Activated naive CD4-positive, alpha-beta T cell treated with anti-CD3 and anti-CD28 coated beads for 36 hours (primary cell): ENCODE measurements at regions of chr1 and their contacts with region 1.

Region 1: GRCh38 chr1:53945433-53946251 is at the start of gene IFT25:
- DNase-seq: peak; percentile 99
- H3K4me3 Mint-ChIP-seq: peak within 1 kb of the TSS; percentile 90
- H3K27ac Mint-ChIP-seq: peak within 1 kb of the TSS; percentile 87
- H3K4me1 Mint-ChIP-seq: peaks cover 45% of the 10 kb centered on the region
- H3K27me3 Mint-ChIP-seq: no peaks in the 10 kb centered on the region
- total RNA-seq, gene IFT25: 46.2 to 48.7 TPM

Region 2: DNA sequence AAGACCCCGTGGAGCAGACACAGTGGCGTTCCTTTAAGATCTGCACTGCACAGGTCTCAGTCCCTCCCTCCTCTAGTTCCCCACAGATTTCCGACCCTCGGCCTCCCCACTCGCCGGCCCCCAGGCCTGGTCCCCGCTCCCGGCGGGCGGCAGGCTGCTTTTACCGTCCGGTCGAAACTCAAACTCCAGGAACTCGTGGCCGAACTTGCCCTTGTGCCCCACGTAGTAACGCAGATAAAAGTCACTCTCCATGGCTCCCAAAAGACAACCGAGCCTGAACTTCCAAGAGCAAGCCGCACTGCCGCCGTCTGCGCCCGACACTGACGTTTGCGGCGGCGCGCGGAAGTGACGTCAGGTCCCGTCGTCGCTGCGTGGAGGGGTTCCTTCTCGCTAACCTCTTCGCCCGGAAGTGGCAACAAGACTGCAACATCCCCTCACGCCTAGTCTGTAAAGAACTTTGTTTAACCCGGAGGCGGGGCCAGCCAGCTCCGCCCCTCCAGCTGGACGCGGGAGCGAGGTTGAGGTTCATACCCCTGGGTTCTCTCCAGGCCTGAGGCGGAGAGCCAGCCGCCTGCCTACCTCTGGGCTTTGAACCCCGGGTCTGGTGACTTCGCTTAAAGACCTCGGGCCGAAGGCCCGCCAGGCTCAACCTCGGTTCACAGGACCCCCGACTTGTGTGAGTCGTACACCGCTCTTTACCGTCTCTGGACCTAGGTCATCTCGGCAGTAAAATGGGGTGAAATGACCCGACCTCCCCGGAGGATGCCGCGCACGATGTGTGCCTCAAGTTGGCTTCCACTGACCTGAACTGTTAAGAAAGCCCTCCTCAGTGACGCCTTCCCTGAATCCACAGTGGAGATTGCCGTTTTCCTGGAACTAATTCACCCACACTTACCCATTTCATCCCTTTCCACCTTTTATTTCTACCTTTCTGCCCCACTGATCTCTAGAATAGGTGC is 707.2 kb before region 1 on chr1 and contains the start of gene MAGOH:
- CTCF ChIA-PET with region 1: no interaction called
- intact Hi-C with region 1: loop called (anchors 5 kb)
- DNase-seq: peak; percentile 96
- H3K4me3 Mint-ChIP-seq: peak within 1 kb of the TSS; percentile 94
- H3K27ac Mint-ChIP-seq: peak within 1 kb of the TSS; percentile 82
- H3K4me1 Mint-ChIP-seq: peaks cover 28% of the 10 kb centered on the region
- H3K27me3 Mint-ChIP-seq: no peaks in the 10 kb centered on the region
- total RNA-seq, gene MAGOH: 83.7 to 87.2 TPM

Region 3: DNA sequence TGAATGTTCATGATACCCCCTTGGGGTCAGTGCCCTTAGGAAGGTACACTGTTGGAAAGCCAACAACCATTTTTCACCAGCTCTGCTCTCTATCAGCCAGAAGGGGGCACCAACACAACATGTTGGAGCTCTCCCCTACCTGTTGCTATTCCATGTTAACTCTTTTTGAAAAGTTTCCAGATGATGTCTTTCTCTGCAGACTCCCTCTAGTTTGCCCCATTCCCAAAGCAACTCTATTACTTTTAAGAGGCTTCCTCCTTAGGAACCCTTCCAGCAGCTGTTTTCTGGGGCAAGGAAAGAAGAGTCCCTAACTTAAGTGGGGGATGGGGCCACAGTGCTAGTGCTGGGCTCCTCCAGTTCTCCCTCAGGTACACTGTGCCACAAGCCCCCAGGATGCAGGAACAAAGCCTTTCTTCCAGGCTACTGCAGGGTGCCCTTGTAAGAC is 84.7 kb before region 1 on chr1:
- CTCF ChIA-PET with region 1: interaction called, 112 read pairs
- intact Hi-C with region 1: loop called (anchors 1 kb)
- DNase-seq: peak; percentile 67
- H3K4me3 Mint-ChIP-seq: no peak overlapping the region
- H3K27ac Mint-ChIP-seq: no peak overlapping the region
- H3K4me1 Mint-ChIP-seq: peaks cover 18% of the 10 kb centered on the region
- H3K27me3 Mint-ChIP-seq: no peaks in the 10 kb centered on the region

Region 4: DNA sequence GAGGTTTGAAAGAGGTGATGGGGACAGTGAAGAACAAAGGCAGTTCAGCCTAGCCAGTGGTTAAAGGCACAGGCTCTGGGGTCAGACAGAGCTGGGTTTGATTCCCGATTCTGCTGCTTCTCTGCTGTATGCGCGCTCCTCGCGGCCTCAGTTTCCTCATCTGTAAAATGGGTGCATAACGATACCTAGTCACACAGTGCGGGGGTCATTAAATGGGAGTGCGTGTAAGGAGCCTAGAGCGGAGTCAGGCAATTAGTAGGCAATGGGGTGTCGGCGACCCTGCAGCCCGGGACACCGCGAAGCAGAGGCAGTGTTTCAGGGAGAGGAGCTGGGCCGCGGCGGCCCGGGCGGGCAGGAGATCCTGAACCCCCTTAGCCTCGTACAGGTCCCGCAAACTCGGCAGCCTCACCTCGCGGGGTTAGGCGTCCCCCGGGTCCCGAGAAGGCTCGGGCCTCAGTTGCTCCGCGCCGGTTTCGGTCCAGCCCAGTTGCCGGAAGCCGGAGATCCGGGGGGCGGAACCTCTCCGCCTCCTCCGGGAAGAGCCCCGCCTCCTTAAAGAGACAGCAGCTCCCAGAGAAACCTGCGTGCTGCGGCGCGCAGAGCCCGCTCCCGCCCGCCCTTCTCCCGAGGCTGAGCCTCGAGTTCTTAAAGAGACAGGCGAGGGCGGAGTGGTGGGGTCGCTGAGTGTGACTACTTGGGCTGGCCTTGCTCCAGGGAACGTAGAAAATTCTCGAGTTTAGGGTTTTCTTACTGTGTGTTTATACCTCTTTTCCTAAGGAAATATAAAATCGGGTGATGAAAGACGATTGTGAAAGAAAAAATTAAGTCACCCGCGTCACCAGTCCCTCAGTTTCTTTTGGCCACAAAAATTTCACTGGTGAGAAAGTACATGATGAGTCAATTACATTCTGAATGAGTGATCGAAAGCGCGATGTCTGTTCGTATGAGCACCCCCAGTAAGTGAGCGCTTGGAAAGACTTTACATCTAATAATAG is 56.0 kb before region 1 on chr1 and contains the start of gene YIPF1:
- CTCF ChIA-PET with region 1: interaction called, 8 read pairs
- intact Hi-C with region 1: loop called (anchors 1 kb)
- DNase-seq: peak; percentile 91
- H3K4me3 Mint-ChIP-seq: peak within 1 kb of the TSS; percentile 94
- H3K27ac Mint-ChIP-seq: peak within 1 kb of the TSS; percentile 99
- H3K4me1 Mint-ChIP-seq: peaks cover 39% of the 10 kb centered on the region
- H3K27me3 Mint-ChIP-seq: no peaks in the 10 kb centered on the region
- total RNA-seq, gene YIPF1: 22.2 to 22.4 TPM

Region 5: DNA sequence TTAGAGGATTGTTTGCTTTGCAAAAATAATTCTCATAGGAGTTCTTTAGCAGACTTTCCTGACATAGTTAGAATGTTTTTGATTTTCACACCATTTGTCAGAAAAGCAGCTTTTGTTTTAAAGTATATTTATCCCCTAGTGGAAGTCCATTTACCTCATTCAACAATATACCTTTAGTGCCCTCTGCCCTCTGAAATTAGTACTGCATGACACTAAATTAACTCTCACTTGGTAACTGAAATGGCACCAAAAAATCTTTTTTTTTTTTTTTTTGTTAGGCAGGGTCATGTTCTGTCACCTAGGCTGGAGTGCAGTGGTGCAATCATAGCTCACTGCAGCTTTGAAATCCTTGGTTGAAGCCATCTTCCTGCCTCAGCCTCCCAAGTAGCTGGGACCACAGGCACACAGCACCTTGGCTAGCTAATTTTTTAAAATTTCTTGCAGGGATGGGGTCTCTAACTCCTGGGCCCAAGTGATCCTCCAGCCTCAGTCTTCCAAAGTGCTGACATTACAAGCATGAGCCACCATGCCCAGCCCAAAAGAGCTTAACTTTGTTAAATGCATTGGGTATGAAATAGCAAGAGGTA is 14.1 kb after region 1 on chr1:
- CTCF ChIA-PET with region 1: interaction called, 15 read pairs
- intact Hi-C with region 1: no loop called
- DNase-seq: no peak
- H3K4me3 Mint-ChIP-seq: no peak overlapping the region
- H3K27ac Mint-ChIP-seq: no peak overlapping the region
- H3K4me1 Mint-ChIP-seq: peaks cover 11% of the 10 kb centered on the region
- H3K27me3 Mint-ChIP-seq: no peaks in the 10 kb centered on the region

Region 6: DNA sequence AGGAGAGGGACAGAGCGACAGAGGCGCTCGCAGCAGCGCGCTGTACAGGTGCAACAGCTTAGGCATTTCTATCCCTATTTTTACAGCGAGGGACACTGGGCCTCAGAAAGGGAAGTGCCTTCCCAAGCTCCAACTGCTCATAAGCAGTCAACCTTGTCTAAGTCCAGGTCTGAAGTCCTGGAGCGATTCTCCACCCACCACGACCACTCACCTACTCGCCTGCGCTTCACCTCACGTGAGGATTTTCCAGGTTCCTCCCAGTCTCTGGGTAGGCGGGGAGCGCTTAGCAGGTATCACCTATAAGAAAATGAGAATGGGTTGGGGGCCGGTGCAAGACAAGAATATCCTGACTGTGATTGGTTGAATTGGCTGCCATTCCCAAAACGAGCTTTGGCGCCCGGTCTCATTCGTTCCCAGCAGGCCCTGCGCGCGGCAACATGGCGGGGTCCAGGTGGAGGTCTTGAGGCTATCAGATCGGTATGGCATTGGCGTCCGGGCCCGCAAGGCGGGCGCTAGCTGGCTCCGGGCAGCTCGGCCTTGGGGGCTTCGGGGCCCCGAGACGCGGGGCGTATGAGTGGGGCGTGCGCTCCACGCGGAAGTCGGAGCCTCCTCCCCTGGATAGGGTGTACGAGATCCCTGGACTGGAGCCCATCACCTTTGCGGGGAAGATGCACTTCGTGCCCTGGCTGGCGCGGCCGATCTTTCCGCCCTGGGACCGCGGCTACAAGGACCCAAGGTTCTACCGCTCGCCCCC is 254.3 kb after region 1 on chr1 and contains the starts of genes CYB5RL and MRPL37:
- CTCF ChIA-PET with region 1: no interaction called
- intact Hi-C with region 1: loop called (anchors 1 kb)
- DNase-seq: peak; percentile 96
- H3K4me3 Mint-ChIP-seq: peak within 1 kb of the TSS; percentile 92
- H3K27ac Mint-ChIP-seq: peak within 1 kb of the TSS; percentile 59
- H3K4me1 Mint-ChIP-seq: peaks cover 32% of the 10 kb centered on the region
- H3K27me3 Mint-ChIP-seq: no peaks in the 10 kb centered on the region
- total RNA-seq, gene CYB5RL: 12.7 to 13.6 TPM
- total RNA-seq, gene MRPL37: 203 to 211 TPM

Region 7: DNA sequence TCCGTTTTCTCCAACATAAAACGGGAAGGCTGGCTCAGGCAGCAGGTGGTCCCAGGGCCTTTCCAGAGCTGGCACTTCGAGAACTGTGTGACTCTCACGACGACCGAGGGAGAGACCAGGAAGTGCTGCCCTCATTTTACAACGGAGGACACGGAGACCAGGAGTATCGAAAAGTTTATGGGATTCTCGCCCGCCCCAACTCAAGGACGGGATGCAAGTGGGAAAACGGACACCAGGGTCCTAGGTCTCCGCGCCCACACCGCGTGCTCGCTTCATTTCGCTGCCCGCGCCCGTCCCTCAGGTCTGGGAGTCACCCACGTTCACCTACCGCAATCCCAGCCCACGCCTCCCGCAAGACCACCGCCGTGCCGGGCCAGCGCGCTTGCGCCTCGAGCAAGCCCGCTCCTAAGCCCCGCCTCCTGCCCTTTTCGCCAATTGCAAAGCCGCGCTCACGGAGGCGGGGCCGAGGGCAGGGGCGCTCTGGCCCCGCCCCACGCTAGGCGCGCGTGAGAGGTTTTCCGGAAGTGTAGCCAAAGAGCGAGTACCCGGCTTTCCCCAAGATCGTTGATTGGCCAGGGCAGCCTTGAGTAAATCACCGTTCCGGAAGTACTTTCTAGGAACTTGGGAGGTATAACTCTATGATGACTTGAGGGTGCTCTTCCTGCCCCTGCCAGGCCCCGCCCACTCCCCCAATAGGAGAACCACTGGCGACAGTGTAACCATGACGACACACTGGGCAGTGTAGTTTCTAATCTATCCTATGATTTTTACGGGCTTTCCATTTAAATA is 818.7 kb after region 1 on chr1 and contains the start of gene PARS2:
- CTCF ChIA-PET with region 1: no interaction called
- intact Hi-C with region 1: loop called (anchors 1 kb)
- DNase-seq: peak; percentile 96
- H3K4me3 Mint-ChIP-seq: peak within 1 kb of the TSS; percentile 94
- H3K27ac Mint-ChIP-seq: peak within 1 kb of the TSS; percentile 83
- H3K4me1 Mint-ChIP-seq: peaks cover 19% of the 10 kb centered on the region
- H3K27me3 Mint-ChIP-seq: no peaks in the 10 kb centered on the region
- total RNA-seq, gene PARS2: 3.0 to 3.1 TPM